Gastrocnemius medialis (tissue), 4 donors: ENCODE measurements at regions of chr2 and their contacts with region 1.

Region 1: DNA sequence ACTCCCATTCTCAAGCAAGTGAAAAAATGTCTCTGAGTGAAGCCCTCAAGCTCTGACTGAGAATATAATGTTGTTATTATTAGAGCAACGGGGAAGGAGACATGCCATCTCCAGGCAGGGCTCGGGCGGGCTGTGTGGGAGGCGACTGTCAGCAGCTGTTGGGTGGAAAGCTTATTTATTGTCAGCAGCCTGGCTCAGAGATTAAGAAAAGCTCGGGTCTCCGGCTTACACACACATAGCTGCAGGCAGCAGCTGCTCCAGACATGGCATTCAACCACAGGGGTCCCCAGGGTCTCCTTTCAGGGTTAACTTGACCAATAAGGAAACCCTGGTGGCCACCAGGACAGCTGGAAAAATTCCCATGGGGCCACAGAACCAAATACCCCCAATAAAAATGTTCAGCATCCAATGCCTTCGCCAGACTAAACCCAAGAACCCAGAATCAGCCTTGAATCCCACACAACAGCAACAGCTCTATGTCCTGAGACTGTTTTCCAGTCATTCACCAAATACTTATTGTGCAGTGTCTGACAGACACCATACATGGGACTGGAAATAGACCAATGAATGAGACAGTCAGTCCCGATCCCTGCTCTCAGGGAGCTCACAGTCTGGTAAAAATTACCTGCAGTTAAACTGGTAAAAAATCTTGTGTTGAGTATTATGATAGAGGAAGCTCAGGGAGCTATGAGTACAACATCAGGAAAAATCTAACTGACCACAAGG is 70.5 kb upstream of the RTN4 start:
- DNase-seq: peak in 1 of 2 donors; percentile 51
- ATAC-seq: peak in 1 of 2 donors; percentile 89
- H3K4me3 ChIP-seq: peak overlapping the region in 1 of 4 donors; percentile 9
- H3K27ac ChIP-seq: peak overlapping the region; percentile 22 to 68 (median 55)
- H3K4me1 ChIP-seq: peaks cover 15 to 17% of the 10 kb centered on the region in 2 donors
- H3K27me3 ChIP-seq: no peaks in the 10 kb centered on the region
- CTCF ChIP-seq: no peak
- POLR2A ChIP-seq: no peak

Region 2: DNA sequence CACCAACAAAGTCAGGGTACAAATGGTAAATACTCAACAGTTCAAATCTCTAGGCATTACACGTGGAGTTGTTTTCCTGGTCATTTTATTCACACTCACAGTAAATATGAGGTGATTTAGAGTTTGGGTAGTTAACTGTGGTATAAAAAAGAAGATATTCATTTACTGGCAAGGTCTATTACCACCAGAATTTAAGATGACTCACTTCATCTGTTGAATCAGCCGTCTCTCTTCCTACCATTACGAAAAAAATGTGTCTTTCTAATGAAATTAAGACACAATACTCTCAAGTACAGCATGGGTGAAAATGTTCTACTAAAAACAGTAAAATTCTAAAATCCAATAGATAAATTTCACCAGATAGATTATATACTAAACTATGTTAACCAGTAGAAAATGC is 1240.0 kb before region 1 on chr2:
- in situ Hi-C with region 1: no loop called
- intact Hi-C with region 1: loop called (anchors 10 kb)
- DNase-seq: no peak
- ATAC-seq: no peak
- H3K4me3 ChIP-seq: no peak overlapping the region
- H3K27ac ChIP-seq: peak overlapping the region; percentile 70 to 77 (median 73)
- H3K4me1 ChIP-seq: peaks cover 10 to 13% of the 10 kb centered on the region in 2 donors
- H3K27me3 ChIP-seq: no peaks in the 10 kb centered on the region
- CTCF ChIP-seq: no peak
- POLR2A ChIP-seq: no peak